Naive thymus-derived CD4-positive, alpha-beta T cell (primary cell): ENCODE measurements at regions of chr3 and their contacts with region 1.

Region 1: GRCh38 chr3:31531992-31532586 is 636 bp upstream of the STT3B start:
- DNase-seq: peak; percentile 96 to 99 (median 98)
- ATAC-seq: peak; percentile 91
- H3K4me3 ChIP-seq: peak overlapping the region; percentile 76
- H3K4me3 Mint-ChIP-seq: peak overlapping the region in 7 of 10 donors; percentile 96 to 100 (median 98)
- H3K27ac ChIP-seq: peak overlapping the region; percentile 94
- H3K27ac Mint-ChIP-seq: peak overlapping the region; percentile 95 to 99 (median 98)
- H3K4me1 ChIP-seq: peaks cover 4 to 31% of the 10 kb centered on the region in 2 donors
- H3K4me1 Mint-ChIP-seq: peaks cover 0 to 25% (median 18%) of the 10 kb centered on the region in 7 donors
- H3K27me3 ChIP-seq: no peaks in the 10 kb centered on the region
- H3K27me3 Mint-ChIP-seq: no peaks in the 10 kb centered on the region

Region 2: GRCh38 chr3:30353711-30354467 is 1178.2 kb before region 1 on chr3:
- CTCF ChIA-PET with region 1: no interaction called
- POLR2A ChIA-PET with region 1: no interaction called
- intact Hi-C with region 1: loop called (anchors 10 kb)
- DNase-seq: peak; percentile 5 to 94 (median 87)
- ATAC-seq: peak; percentile 99
- H3K4me3 ChIP-seq: peak overlapping the region; percentile 36
- H3K4me3 Mint-ChIP-seq: peak overlapping the region; percentile 65 to 81 (median 68)
- H3K27ac ChIP-seq: no peak overlapping the region
- H3K27ac Mint-ChIP-seq: peak overlapping the region; percentile 23 to 96 (median 90)
- H3K4me1 ChIP-seq: peaks cover 38 to 66% of the 10 kb centered on the region in 2 donors
- H3K4me1 Mint-ChIP-seq: peaks cover 50 to 96% (median 88%) of the 10 kb centered on the region in 7 donors
- H3K27me3 ChIP-seq: no peaks in the 10 kb centered on the region
- H3K27me3 Mint-ChIP-seq: peaks cover 0 to 50% (median 0%) of the 10 kb centered on the region in 5 donors

Region 3: DNA sequence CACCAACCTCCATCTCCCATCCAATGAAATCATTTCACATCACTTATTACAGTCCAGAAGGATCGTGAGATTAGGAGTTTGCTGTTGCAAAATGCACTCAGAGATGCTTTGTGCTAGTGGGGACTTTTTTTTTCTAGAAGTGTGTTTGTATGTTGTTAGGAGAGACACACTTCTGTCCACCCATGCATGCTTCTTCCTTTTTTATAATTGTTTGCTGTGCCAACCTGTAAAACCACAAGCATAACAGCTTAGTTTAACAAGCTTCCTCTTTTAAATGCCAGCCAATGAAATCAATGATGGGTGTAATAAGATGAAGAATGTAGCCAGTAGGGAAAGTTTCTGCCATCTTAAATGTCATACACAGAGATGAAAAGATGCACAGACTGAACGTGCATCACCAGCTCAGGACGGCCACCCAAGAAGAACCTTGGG is 304.9 kb before region 1 on chr3:
- CTCF ChIA-PET with region 1: interaction called, 3 read pairs
- POLR2A ChIA-PET with region 1: interaction called, 47 read pairs
- intact Hi-C with region 1: loop called (anchors 1 to 2 kb)
- DNase-seq: peak in 7 of 9 donors; percentile 38 to 82 (median 60)
- ATAC-seq: peak; percentile 89
- H3K4me3 ChIP-seq: peak overlapping the region; percentile 47
- H3K4me3 Mint-ChIP-seq: peak overlapping the region; percentile 38 to 80 (median 66)
- H3K27ac ChIP-seq: peak overlapping the region; percentile 66
- H3K27ac Mint-ChIP-seq: peak overlapping the region; percentile 82 to 96 (median 92)
- H3K4me1 ChIP-seq: peaks cover 75 to 84% of the 10 kb centered on the region in 2 donors
- H3K4me1 Mint-ChIP-seq: peaks cover 73 to 97% (median 93%) of the 10 kb centered on the region in 7 donors
- H3K27me3 ChIP-seq: no peaks in the 10 kb centered on the region
- H3K27me3 Mint-ChIP-seq: no peaks in the 10 kb centered on the region

Region 4: GRCh38 chr3:31462050-31462569 is 70.0 kb before region 1 on chr3:
- CTCF ChIA-PET with region 1: interaction called, 16 read pairs
- POLR2A ChIA-PET with region 1: interaction called, 114 read pairs
- intact Hi-C with region 1: loop called (anchors 1 to 5 kb)
- DNase-seq: peak in 7 of 9 donors; percentile 78 to 93 (median 86)
- ATAC-seq: peak; percentile 93
- H3K4me3 ChIP-seq: peak overlapping the region; percentile 49
- H3K4me3 Mint-ChIP-seq: peak overlapping the region; percentile 28 to 95 (median 78)
- H3K27ac ChIP-seq: peak overlapping the region; percentile 68
- H3K27ac Mint-ChIP-seq: peak overlapping the region; percentile 70 to 100 (median 96)
- H3K4me1 ChIP-seq: peaks cover 49 to 59% of the 10 kb centered on the region in 2 donors
- H3K4me1 Mint-ChIP-seq: peaks cover 14 to 79% (median 68%) of the 10 kb centered on the region in 7 donors
- H3K27me3 ChIP-seq: no peaks in the 10 kb centered on the region
- H3K27me3 Mint-ChIP-seq: no peaks in the 10 kb centered on the region

Region 5: GRCh38 chr3:31634481-31634880 is 102.4 kb after region 1 on chr3:
- CTCF ChIA-PET with region 1: interaction called, 3 read pairs
- POLR2A ChIA-PET with region 1: interaction called, 5 read pairs
- intact Hi-C with region 1: loop called (anchors 1 to 2 kb)
- DNase-seq: no peak
- ATAC-seq: no peak
- H3K4me3 ChIP-seq: no peak overlapping the region
- H3K4me3 Mint-ChIP-seq: no peak overlapping the region
- H3K27ac ChIP-seq: no peak overlapping the region
- H3K27ac Mint-ChIP-seq: peak overlapping the region in 8 of 9 donors; percentile 28 to 86 (median 62)
- H3K4me1 ChIP-seq: peaks cover 10 to 28% of the 10 kb centered on the region in 2 donors
- H3K4me1 Mint-ChIP-seq: peaks cover 17 to 72% (median 61%) of the 10 kb centered on the region in 7 donors
- H3K27me3 ChIP-seq: no peaks in the 10 kb centered on the region
- H3K27me3 Mint-ChIP-seq: no peaks in the 10 kb centered on the region

Region 6: GRCh38 chr3:32238453-32239306 is 706.6 kb after region 1 on chr3 and contains the start of gene CMTM8:
- CTCF ChIA-PET with region 1: no interaction called
- POLR2A ChIA-PET with region 1: no interaction called
- intact Hi-C with region 1: loop called (anchors 5 kb)
- DNase-seq: peak; percentile 46 to 70 (median 67)
- ATAC-seq: peak; percentile 89
- H3K4me3 ChIP-seq: peak within 1 kb of the TSS; percentile 81
- H3K4me3 Mint-ChIP-seq: peak within 1 kb of the TSS; percentile 88 to 93 (median 90)
- H3K27ac ChIP-seq: peak within 1 kb of the TSS; percentile 64
- H3K27ac Mint-ChIP-seq: peak within 1 kb of the TSS; percentile 58 to 82 (median 74)
- H3K4me1 ChIP-seq: peaks cover 13 to 17% of the 10 kb centered on the region in 2 donors
- H3K4me1 Mint-ChIP-seq: peaks cover 37 to 58% (median 50%) of the 10 kb centered on the region in 7 donors
- H3K27me3 ChIP-seq: no peaks in the 10 kb centered on the region
- H3K27me3 Mint-ChIP-seq: peaks cover 0 to 25% (median 0%) of the 10 kb centered on the region in 5 donors
- total RNA-seq, gene CMTM8: 7.4 to 13.6 (median 8.6) TPM

Region 7: DNA sequence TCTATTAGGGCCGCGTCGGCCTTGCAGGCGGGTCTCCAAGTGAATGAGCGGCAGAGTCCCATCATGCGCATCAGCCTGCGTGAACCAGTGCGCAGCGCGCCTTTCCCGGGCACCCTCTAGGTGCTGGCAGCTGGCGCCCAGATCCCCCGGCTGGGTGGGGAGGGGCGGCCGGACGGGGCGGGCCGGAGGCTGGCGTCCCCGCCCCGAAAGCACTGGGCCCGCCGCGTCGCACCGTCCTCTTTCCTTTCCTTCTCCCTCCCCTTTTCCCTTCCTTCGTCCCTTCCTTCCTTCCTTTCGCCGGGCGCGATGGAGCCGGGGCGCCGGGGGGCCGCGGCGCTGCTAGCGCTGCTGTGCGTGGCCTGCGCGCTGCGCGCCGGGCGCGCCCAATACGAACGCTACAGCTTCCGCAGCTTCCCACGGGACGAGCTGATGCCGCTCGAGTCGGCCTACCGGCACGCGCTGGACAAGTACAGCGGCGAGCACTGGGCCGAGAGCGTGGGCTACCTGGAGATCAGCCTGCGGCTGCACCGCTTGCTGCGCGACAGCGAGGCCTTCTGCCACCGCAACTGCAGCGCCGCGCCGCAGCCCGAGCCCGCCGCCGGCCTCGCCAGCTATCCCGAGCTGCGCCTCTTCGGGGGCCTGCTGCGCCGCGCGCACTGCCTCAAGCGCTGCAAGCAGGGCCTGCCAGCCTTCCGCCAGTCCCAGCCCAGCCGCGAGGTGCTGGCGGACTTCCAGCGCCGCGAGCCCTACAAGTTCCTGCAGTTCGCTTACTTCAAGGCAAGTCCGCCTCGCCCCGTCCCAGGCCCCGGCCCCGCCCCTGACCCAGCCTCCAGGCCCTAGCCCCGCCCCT is 1581.9 kb after region 1 on chr3 and contains the start of gene CRTAP:
- CTCF ChIA-PET with region 1: no interaction called
- POLR2A ChIA-PET with region 1: no interaction called
- intact Hi-C with region 1: loop called in 1 of 2 experiments (anchors 5 kb)
- DNase-seq: peak; percentile 69 to 86 (median 79)
- ATAC-seq: peak; percentile 92
- H3K4me3 ChIP-seq: peak within 1 kb of the TSS; percentile 82
- H3K4me3 Mint-ChIP-seq: peak within 1 kb of the TSS; percentile 88 to 95 (median 92)
- H3K27ac ChIP-seq: peak within 1 kb of the TSS; percentile 69
- H3K27ac Mint-ChIP-seq: peak within 1 kb of the TSS; percentile 75 to 91 (median 85)
- H3K4me1 ChIP-seq: peaks cover 17 to 23% of the 10 kb centered on the region in 2 donors
- H3K4me1 Mint-ChIP-seq: peaks cover 23 to 52% (median 37%) of the 10 kb centered on the region in 7 donors
- H3K27me3 ChIP-seq: no peaks in the 10 kb centered on the region
- H3K27me3 Mint-ChIP-seq: no peaks in the 10 kb centered on the region
- total RNA-seq, gene CRTAP: 27.1 to 86.1 (median 46.4) TPM